ENCODE measurements at regions of chr7 and their contacts with region 1.

Region 1: DNA sequence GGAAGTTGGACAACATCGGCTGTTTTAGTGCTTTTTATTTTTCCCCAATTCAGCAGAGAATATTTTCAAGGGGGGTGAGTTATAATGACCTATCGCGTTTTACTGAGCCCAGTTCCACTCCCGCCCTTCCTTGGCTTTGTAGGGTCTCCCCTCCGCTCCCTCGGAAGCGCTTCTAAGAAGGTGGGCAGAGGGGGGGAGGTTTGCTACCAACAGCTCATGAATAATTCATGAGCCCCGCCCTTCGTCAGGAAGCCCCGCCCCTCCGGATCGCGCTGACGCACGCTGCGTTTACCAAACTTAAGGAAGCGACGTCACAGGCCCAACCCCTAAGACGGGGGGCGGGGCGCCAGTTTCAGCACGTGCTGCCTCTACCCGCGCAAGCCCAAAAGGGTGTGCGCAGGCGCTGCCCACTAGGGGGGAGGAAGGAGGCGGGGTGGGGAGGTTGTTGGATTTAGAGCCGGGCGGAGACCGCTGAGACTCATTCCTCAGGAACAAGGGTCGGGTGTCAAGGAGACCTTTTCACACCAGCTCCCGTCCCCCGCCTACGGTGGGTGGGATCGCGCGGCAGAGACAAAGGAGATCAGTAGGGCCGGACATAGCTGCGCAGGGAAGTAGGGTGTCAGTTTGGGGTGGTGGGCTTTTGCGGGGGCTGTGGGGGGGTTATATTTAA is 529 bp upstream of the MEPCE start:
- DNase-seq: peak; percentile 93 to 100
- ATAC-seq: peak; percentile 63 to 73
- H3K4me3 ChIP-seq: peak overlapping the region; percentile 86
- H3K27ac ChIP-seq: peak overlapping the region; percentile 93 to 100
- H3K4me1 ChIP-seq: peaks cover 26% of the 10 kb centered on the region; the same call in 2 of the 3 replicates
- CTCF ChIP-seq: no peak
- EP300 ChIP-seq: no peak
- POLR2A ChIP-seq: peak; percentile 93
- RAD21 ChIP-seq: no peak

Region 2: GRCh38 chr7:100177045-100178001 is 251.8 kb before region 1 on chr7 and contains the starts of genes GPC2 and STAG3:
- CTCF ChIA-PET with region 1: no interaction called
- POLR2A ChIA-PET with region 1: interaction called, 12 read pairs
- DNase-seq: peak; percentile 87 to 96
- ATAC-seq: peak; percentile 89 to 95
- H3K4me3 ChIP-seq: peak within 1 kb of the TSS; percentile 64
- H3K27ac ChIP-seq: peak within 1 kb of the TSS; percentile 68 to 83
- H3K4me1 ChIP-seq: peaks cover 9% of the 10 kb centered on the region; the same call in 2 of the 3 replicates
- CTCF ChIP-seq: no peak
- EP300 ChIP-seq: no peak
- POLR2A ChIP-seq: peak; percentile 19; the same call in 1 of the 2 replicates
- RAD21 ChIP-seq: no peak
- polyA plus RNA-seq, gene GPC2: 1.1 and 1.8 TPM in 2 replicates
- polyA plus RNA-seq, gene STAG3: 0.25 and 0.36 TPM in 2 replicates

Region 3: GRCh38 chr7:100413889-100414288 is 15.2 kb before region 1 on chr7:
- CTCF ChIA-PET with region 1: interaction called, 4 read pairs
- POLR2A ChIA-PET with region 1: interaction called, 14 read pairs
- DNase-seq: no peak
- ATAC-seq: no peak
- H3K4me3 ChIP-seq: no peak overlapping the region
- H3K27ac ChIP-seq: no peak overlapping the region
- H3K4me1 ChIP-seq: no peaks in the 10 kb centered on the region
- CTCF ChIP-seq: no peak
- EP300 ChIP-seq: no peak
- POLR2A ChIP-seq: no peak
- RAD21 ChIP-seq: no peak

Region 4: DNA sequence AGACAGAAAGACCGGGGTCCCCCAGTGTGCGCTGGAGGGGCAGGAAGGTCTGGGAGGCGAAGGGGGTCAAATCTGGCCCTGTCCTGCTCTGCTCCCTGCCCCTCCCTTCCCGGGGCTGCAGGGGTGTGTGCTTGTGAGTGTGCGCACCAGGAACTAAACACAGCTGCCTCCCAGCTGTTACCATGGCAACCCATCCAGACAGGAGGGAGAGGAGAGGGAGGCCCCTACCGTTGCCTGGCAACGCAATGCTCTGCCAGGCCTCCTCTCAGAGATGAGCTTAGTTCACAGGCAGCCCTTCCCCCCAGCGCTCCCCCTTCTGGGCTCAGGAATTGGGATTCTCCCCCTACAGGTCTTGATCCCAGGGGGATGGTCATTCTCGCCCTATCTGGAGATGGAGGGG is 60.7 kb after region 1 on chr7:
- CTCF ChIA-PET with region 1: no interaction called
- POLR2A ChIA-PET with region 1: no interaction called
- DNase-seq: peak; percentile 86 to 87
- ATAC-seq: peak; percentile 41 to 72
- H3K4me3 ChIP-seq: no peak overlapping the region
- H3K27ac ChIP-seq: no peak overlapping the region
- H3K4me1 ChIP-seq: peaks cover 23% of the 10 kb centered on the region
- CTCF ChIP-seq: no peak
- EP300 ChIP-seq: no peak
- POLR2A ChIP-seq: no peak
- RAD21 ChIP-seq: no peak

Region 5: GRCh38 chr7:100586266-100587025 is 157.3 kb after region 1 on chr7 and contains the start of gene FBXO24:
- CTCF ChIA-PET with region 1: no interaction called
- POLR2A ChIA-PET with region 1: interaction called, 18 read pairs
- DNase-seq: peak; percentile 100
- ATAC-seq: peak; percentile 88 to 95
- H3K4me3 ChIP-seq: peak within 1 kb of the TSS; percentile 99
- H3K27ac ChIP-seq: peak within 1 kb of the TSS; percentile 95 to 99
- H3K4me1 ChIP-seq: peaks cover 15% of the 10 kb centered on the region
- CTCF ChIP-seq: no peak
- EP300 ChIP-seq: no peak
- POLR2A ChIP-seq: peak; percentile 79
- RAD21 ChIP-seq: no peak
- polyA plus RNA-seq, gene FBXO24: 0.36 and 0.52 TPM in 2 replicates